GM13976 (cell line): ENCODE measurements at regions of chr17 and their contacts with region 1.

Region 1: DNA sequence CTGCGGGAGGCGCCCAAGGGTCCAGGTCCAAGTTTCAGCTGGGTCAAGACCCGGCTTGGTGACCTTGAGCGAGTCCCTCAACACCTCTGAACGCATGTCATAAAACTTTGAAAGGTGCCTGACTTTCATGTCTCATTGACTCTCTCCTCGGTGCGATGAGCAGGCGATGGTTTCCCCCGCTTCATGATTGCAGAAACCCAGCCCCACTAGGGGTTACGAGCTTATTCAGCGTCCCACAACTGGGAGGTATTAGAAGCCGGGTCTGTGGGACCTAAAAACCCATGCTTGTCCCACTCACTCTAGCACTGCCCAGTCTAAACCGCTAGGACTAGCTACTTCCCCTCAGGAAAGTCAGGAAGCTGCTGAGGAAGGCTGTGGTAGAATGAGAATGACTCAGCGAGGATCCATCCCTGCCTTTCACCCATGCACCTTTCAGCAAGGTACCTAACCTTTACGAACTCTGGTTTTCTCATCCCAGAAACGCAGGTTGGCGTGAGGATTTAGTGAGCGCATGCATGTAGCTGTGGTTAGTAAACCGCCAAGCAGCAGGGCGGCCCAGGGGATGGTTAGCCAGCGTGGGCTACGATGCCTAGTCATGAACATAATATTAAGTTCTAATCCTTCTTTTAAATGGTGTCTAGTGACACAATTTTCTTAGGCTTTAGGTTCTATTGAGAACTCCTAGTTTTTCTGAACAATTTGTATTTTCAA is 26.2 kb upstream of the RFFL start:
- DNase-seq: peak; percentile 48
- CTCF ChIP-seq: no peak

Region 2: DNA sequence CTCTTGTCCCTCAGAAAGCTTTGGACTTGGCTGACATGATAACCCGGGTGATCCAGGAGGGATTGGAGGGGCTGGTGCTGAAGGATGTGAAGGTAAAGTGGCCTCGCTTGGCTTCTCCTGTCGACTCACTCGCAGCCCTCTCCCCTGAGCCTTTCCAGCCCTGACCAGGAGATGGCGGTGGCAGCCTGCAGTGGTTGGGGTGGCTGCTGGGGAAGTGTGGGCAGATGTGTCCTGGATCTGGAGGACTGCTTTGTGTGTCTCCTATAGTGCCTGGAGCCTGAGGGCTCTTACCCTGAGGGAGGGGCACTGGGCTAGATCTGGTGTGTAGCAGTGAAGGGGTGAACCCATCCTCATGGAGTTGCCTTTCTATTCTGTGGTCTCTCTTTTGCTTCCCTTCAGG is 91.5 kb before region 1 on chr17:
- in situ Hi-C with region 1: loop called (anchors 10 kb)
- DNase-seq: peak; percentile 89
- CTCF ChIP-seq: peak; percentile 94

Region 3: GRCh38 chr17:35816723-35817122 is 727.0 kb after region 1 on chr17:
- in situ Hi-C with region 1: no loop called
- DNase-seq: no peak
- CTCF ChIP-seq: no peak